ENCODE measurements at regions of chr3 and their contacts with region 1.

Region 1: GRCh38 chr3:172506094-172506493 is 17.1 kb downstream of the TNFSF10 start:
- DNase-seq: no peak
- H3K4me3 ChIP-seq: no peak overlapping the region
- H3K27ac ChIP-seq: no peak overlapping the region
- H3K4me1 ChIP-seq: no peaks in the 10 kb centered on the region
- H3K27me3 ChIP-seq: no peaks in the 10 kb centered on the region
- CTCF ChIP-seq: no peak

Region 2: DNA sequence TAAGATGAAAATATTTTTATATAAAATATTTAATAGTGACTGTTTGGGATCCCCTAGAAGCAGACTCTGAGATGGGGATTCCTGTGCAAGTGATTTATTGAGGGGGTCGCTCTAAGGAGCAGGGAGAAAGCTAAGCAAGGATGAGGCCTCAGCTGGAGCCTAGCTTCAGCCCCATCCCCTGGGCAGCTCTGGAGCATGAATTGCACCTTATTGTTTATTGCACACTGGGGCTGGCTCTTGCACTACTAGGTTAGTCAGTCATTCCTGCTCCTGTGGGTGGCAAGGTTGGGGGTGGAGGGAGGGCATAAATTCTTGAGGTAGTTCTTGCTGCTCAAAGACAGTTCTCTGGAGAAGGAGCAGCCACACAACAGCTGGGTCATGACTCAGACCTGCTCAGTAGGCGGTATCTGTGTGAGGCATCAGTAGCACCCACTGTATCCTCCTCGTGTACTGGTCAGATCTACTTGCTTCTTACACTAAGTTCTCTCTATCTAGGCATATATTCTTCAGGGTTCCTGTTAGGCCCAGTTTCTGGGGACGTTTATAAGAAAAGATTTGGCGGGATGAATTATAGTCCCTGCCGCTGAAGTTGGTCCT is 44.4 kb after region 1 on chr3:
- intact Hi-C with region 1: no loop called
- DNase-seq: peak; percentile 17
- H3K4me3 ChIP-seq: no peak overlapping the region
- H3K27ac ChIP-seq: no peak overlapping the region
- H3K4me1 ChIP-seq: no peaks in the 10 kb centered on the region
- H3K27me3 ChIP-seq: no peaks in the 10 kb centered on the region
- CTCF ChIP-seq: no peak

Region 3: DNA sequence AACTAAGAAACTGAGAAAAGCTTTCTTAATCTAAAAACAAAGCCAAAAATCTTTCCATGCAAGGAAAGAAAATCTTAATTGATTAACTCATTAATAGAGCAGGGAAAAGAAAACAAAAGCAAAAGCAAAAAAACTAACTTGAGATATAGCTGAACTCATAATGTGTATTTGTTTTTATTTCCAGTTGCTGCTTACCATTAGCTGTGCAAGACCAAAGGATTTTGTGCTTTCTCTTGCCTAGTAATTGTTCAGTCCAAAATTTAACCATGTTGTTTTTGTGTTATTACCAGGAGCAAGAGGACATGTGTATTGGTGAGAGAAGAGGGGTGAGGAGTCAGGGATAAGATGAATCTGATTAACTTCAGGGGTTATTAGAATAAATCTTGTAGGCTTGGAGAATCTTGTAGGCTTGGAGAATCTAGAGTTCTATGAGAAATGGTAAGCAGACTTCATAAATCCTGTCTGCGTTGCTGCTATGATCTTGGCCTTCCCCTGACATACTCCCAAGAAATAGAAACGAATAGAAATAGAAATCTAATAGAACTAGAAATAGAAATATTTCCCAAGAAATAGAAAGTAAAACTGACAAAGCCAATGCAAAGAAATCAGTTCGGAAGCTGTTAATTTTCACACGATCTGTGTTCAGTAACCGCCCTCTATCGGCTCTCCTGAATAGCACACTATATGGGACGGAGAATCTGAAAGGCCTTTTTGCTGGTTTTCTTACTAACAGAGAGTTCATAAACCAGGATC is 89.7 kb after region 1 on chr3:
- intact Hi-C with region 1: loop called (anchors 5 kb)
- DNase-seq: peak; percentile 67
- H3K4me3 ChIP-seq: peak overlapping the region; percentile 6
- H3K27ac ChIP-seq: peak overlapping the region; percentile 78
- H3K4me1 ChIP-seq: peaks cover 2% of the 10 kb centered on the region
- H3K27me3 ChIP-seq: no peaks in the 10 kb centered on the region
- CTCF ChIP-seq: peak; percentile 65

Measured in colonic mucosa (tissue), 4 donors.